Pancreas (tissue), 10 donors: ENCODE measurements at regions of chr10 and their contacts with region 1.

Region 1: GRCh38 chr10:99619851-99620712 is at the start of gene SLC25A28:
- DNase-seq: peak; percentile 90 to 97 (median 95)
- ATAC-seq: peak in 2 of 4 donors; percentile 0
- H3K4me3 ChIP-seq: peak within 1 kb of the TSS; percentile 83 to 93 (median 86)
- H3K27ac ChIP-seq: peak within 1 kb of the TSS; percentile 98 to 99 (median 98)
- H3K4me1 ChIP-seq: peaks cover 16 to 23% (median 18%) of the 10 kb centered on the region in 3 donors
- H3K27me3 ChIP-seq: no peaks in the 10 kb centered on the region
- CTCF ChIP-seq: no peak
- total RNA-seq, gene SLC25A28: 18.8 to 29.1 (median 23.8) TPM

Region 2: GRCh38 chr10:99395750-99396445 is 224.2 kb before region 1 on chr10:
- intact Hi-C with region 1: loop called in 1 of 3 experiments (anchors 10 kb)
- DNase-seq: no peak
- ATAC-seq: peak in 1 of 4 donors; percentile 33
- H3K4me3 ChIP-seq: no peak overlapping the region
- H3K27ac ChIP-seq: no peak overlapping the region
- H3K4me1 ChIP-seq: no peaks in the 10 kb centered on the region
- H3K27me3 ChIP-seq: no peaks in the 10 kb centered on the region
- CTCF ChIP-seq: no peak

Region 3: GRCh38 chr10:99444383-99445045 is 175.6 kb before region 1 on chr10:
- intact Hi-C with region 1: loop called in 1 of 3 experiments (anchors 10 kb)
- DNase-seq: no peak
- ATAC-seq: no peak
- H3K4me3 ChIP-seq: no peak overlapping the region
- H3K27ac ChIP-seq: no peak overlapping the region
- H3K4me1 ChIP-seq: no peaks in the 10 kb centered on the region
- H3K27me3 ChIP-seq: no peaks in the 10 kb centered on the region
- CTCF ChIP-seq: no peak